PC-9 (cell line): ENCODE measurements at regions of chr17 and their contacts with region 1.

Region 1: DNA sequence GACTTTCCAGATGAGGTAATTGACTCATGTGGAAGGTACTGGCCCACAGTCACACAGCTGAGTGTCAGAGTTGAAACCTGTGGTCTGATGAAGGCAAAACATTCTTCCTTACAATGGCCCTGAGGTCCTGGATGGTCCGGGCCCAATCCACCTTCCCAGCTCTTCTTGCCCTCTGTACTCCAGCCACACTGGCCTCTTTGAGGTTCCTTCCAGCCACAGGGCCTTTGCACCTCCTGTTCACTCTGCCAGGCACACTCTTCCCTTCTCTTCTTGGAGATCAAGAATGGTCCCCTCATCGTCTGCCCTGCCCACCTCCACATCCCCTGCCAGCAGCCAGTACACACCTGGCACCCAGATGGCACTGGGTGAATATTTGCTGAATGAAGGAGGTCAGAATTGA is 6.5 kb upstream of the PEMT start:
- DNase-seq: no peak
- H3K4me3 ChIP-seq: no peak overlapping the region
- H3K27ac ChIP-seq: no peak overlapping the region
- H3K4me1 ChIP-seq: peaks cover 7% of the 10 kb centered on the region
- H3K27me3 ChIP-seq: no peaks in the 10 kb centered on the region
- CTCF ChIP-seq: no peak

Region 2: GRCh38 chr17:17496189-17497064 is 101.6 kb before region 1 on chr17 and contains the start of gene RASD1:
- CTCF ChIA-PET with region 1: no interaction called
- POLR2A ChIA-PET with region 1: no interaction called
- intact Hi-C with region 1: no loop called
- DNase-seq: peak in 1 of 2 experiments; percentile 86
- H3K4me3 ChIP-seq: no peak within 1 kb of the TSS; the same call in 1 of the 2 replicates
- H3K27ac ChIP-seq: no peak within 1 kb of the TSS
- H3K4me1 ChIP-seq: no peaks in the 10 kb centered on the region; the same call in 1 of the 2 replicates
- H3K27me3 ChIP-seq: no peaks in the 10 kb centered on the region
- CTCF ChIP-seq: peak; percentile 88
- total RNA-seq, gene RASD1: 1.0 and 1.2 TPM in 2 replicates

Region 3: GRCh38 chr17:18910326-18910725 is 1312.3 kb after region 1 on chr17:
- CTCF ChIA-PET with region 1: no interaction called
- POLR2A ChIA-PET with region 1: interaction called, 19 read pairs
- intact Hi-C with region 1: no loop called
- DNase-seq: no peak
- H3K4me3 ChIP-seq: no peak overlapping the region
- H3K27ac ChIP-seq: no peak overlapping the region
- H3K4me1 ChIP-seq: no peaks in the 10 kb centered on the region
- H3K27me3 ChIP-seq: no peaks in the 10 kb centered on the region
- CTCF ChIP-seq: no peak